Activated CD8-positive, alpha-beta T cell treated with anti-CD3 and anti-CD28 coated beads, Interleukin-2, amount 10 ng/mL, durations not matched to agents 7 days and 5 days (primary cell): ENCODE measurements at regions of chr19 and their contacts with region 1.

Region 1: GRCh38 chr19:13150187-13150930 is at the starts of genes IER2 and STX10:
- DNase-seq: peak; percentile 95
- ATAC-seq: peak; percentile 42
- H3K4me3 Mint-ChIP-seq: peak within 1 kb of the TSS; percentile 99
- H3K27ac Mint-ChIP-seq: peak within 1 kb of the TSS; percentile 99
- H3K4me1 Mint-ChIP-seq: peaks cover 20% of the 10 kb centered on the region
- H3K27me3 Mint-ChIP-seq: peaks cover 2% of the 10 kb centered on the region
- total RNA-seq, gene IER2: 203 to 210 TPM
- total RNA-seq, gene STX10: 68.4 to 69.2 TPM

Region 2: GRCh38 chr19:12453491-12453890 is 696.9 kb before region 1 on chr19:
- CTCF ChIA-PET with region 1: no interaction called
- POLR2A ChIA-PET with region 1: no interaction called
- DNase-seq: no peak
- ATAC-seq: no peak
- H3K4me3 Mint-ChIP-seq: no peak overlapping the region
- H3K27ac Mint-ChIP-seq: no peak overlapping the region
- H3K4me1 Mint-ChIP-seq: no peaks in the 10 kb centered on the region
- H3K27me3 Mint-ChIP-seq: no peaks in the 10 kb centered on the region

Region 3: GRCh38 chr19:13002166-13002898 is 148.0 kb before region 1 on chr19:
- CTCF ChIA-PET with region 1: no interaction called
- POLR2A ChIA-PET with region 1: no interaction called
- DNase-seq: no peak
- ATAC-seq: no peak
- H3K4me3 Mint-ChIP-seq: no peak overlapping the region
- H3K27ac Mint-ChIP-seq: no peak overlapping the region
- H3K4me1 Mint-ChIP-seq: no peaks in the 10 kb centered on the region
- H3K27me3 Mint-ChIP-seq: peaks cover 5% of the 10 kb centered on the region

Region 4: GRCh38 chr19:13099073-13099999 is 51.0 kb before region 1 on chr19:
- CTCF ChIA-PET with region 1: interaction called, 7 read pairs
- POLR2A ChIA-PET with region 1: interaction called, 10 read pairs
- DNase-seq: peak; percentile 87
- ATAC-seq: peak; percentile 64
- H3K4me3 Mint-ChIP-seq: peak overlapping the region; percentile 63
- H3K27ac Mint-ChIP-seq: peak overlapping the region; percentile 91
- H3K4me1 Mint-ChIP-seq: peaks cover 58% of the 10 kb centered on the region
- H3K27me3 Mint-ChIP-seq: peaks cover 36% of the 10 kb centered on the region

Region 5: GRCh38 chr19:13117772-13118423 is 32.5 kb before region 1 on chr19 and contains the start of gene NACC1:
- CTCF ChIA-PET with region 1: interaction called, 8 read pairs
- POLR2A ChIA-PET with region 1: interaction called, 64 read pairs
- DNase-seq: peak; percentile 91
- ATAC-seq: peak; percentile 85
- H3K4me3 Mint-ChIP-seq: peak within 1 kb of the TSS; percentile 97
- H3K27ac Mint-ChIP-seq: peak within 1 kb of the TSS; percentile 96
- H3K4me1 Mint-ChIP-seq: peaks cover 53% of the 10 kb centered on the region
- H3K27me3 Mint-ChIP-seq: no peaks in the 10 kb centered on the region
- total RNA-seq, gene NACC1: 74.6 to 84.8 TPM

Region 6: GRCh38 chr19:13162518-13163314 is 12.4 kb after region 1 on chr19:
- CTCF ChIA-PET with region 1: interaction called, 29 read pairs
- POLR2A ChIA-PET with region 1: interaction called, 183 read pairs
- DNase-seq: peak; percentile 96
- ATAC-seq: peak; percentile 67
- H3K4me3 Mint-ChIP-seq: peak overlapping the region; percentile 88
- H3K27ac Mint-ChIP-seq: peak overlapping the region; percentile 89
- H3K4me1 Mint-ChIP-seq: peaks cover 75% of the 10 kb centered on the region
- H3K27me3 Mint-ChIP-seq: no peaks in the 10 kb centered on the region

Region 7: GRCh38 chr19:13181747-13182388 is 31.5 kb after region 1 on chr19:
- CTCF ChIA-PET with region 1: interaction called, 8 read pairs
- POLR2A ChIA-PET with region 1: interaction called, 19 read pairs
- DNase-seq: peak; percentile 41
- ATAC-seq: peak; percentile 42
- H3K4me3 Mint-ChIP-seq: no peak overlapping the region
- H3K27ac Mint-ChIP-seq: peak overlapping the region; percentile 79
- H3K4me1 Mint-ChIP-seq: peaks cover 30% of the 10 kb centered on the region
- H3K27me3 Mint-ChIP-seq: no peaks in the 10 kb centered on the region

Region 8: GRCh38 chr19:13284929-13285928 is 134.9 kb after region 1 on chr19:
- CTCF ChIA-PET with region 1: no interaction called
- POLR2A ChIA-PET with region 1: no interaction called
- DNase-seq: no peak
- ATAC-seq: no peak
- H3K4me3 Mint-ChIP-seq: no peak overlapping the region
- H3K27ac Mint-ChIP-seq: no peak overlapping the region
- H3K4me1 Mint-ChIP-seq: peaks cover 2% of the 10 kb centered on the region
- H3K27me3 Mint-ChIP-seq: no peaks in the 10 kb centered on the region